Endothelial cell of umbilical vein (primary cell): ENCODE measurements at regions of chr12 and their contacts with region 1.

Region 1: DNA sequence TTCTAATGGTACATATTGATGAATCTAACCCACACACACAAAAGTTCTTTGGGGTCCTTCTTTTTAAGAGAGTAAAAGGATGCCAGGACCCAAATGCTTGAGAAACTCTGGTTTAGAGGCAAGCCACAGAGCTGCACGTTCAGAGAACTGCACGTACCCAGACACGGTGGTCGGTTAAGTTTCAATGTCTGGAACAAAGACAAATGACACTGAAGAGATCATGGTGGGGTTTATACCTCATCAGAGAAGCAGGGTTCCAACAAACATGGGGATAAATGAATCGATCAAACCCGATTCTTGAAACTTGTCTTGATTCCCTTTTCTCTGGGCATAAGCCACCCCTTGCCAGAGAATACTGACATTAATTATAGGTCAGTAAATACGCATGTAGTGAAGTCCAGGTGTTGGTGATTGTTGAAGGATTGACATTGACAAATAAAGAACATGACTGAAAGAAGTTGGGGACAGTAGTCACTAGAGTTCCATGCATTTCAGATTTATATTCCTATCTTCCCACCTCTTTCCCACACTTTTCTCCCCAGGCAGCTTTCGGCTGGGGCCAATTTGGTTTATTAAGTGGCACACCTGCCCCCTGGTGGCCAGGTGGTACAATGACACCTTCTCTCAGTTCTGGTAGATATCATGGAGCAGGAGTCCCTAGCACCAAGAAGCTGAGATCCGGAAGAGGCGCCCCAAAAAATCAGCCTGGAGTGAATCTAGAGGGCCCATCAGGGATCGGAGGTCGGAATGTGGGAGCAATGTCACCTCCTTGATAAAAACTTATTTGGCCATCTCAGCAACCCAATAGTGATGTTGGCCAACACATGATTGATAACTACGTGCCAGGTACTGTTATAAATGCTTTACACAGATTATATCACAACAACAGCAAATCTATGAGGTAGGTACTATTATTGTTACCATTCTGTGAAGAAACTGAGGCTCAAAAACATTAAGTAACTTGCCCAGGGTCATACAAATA is 17.8 kb upstream of the HDAC7 start:
- DNase-seq: peak; percentile 70
- H3K4me3 ChIP-seq: no peak overlapping the region
- H3K27ac ChIP-seq: no peak overlapping the region
- H3K4me1 ChIP-seq: no peaks in the 10 kb centered on the region
- H3K27me3 ChIP-seq: no peaks in the 10 kb centered on the region
- CTCF ChIP-seq: peak; percentile 75 to 80
- POLR2A ChIP-seq: no peak

Region 2: GRCh38 chr12:47651368-47652254 is 185.9 kb before region 1 on chr12:
- CTCF ChIA-PET with region 1: interaction called, 21 read pairs
- POLR2A ChIA-PET with region 1: no interaction called
- dilution Hi-C with region 1: no loop called
- intact Hi-C with region 1: loop called (anchors 1 kb)
- DNase-seq: peak; percentile 66
- H3K4me3 ChIP-seq: no peak overlapping the region
- H3K27ac ChIP-seq: no peak overlapping the region
- H3K4me1 ChIP-seq: no peaks in the 10 kb centered on the region
- H3K27me3 ChIP-seq: no peaks in the 10 kb centered on the region
- CTCF ChIP-seq: peak; percentile 39 to 50
- POLR2A ChIP-seq: no peak

Region 3: GRCh38 chr12:47725893-47726292 is 111.6 kb before region 1 on chr12:
- CTCF ChIA-PET with region 1: interaction called, 23 read pairs
- POLR2A ChIA-PET with region 1: no interaction called
- dilution Hi-C with region 1: no loop called
- intact Hi-C with region 1: no loop called
- DNase-seq: no peak
- H3K4me3 ChIP-seq: no peak overlapping the region
- H3K27ac ChIP-seq: no peak overlapping the region
- H3K4me1 ChIP-seq: no peaks in the 10 kb centered on the region
- H3K27me3 ChIP-seq: no peaks in the 10 kb centered on the region
- CTCF ChIP-seq: no peak
- POLR2A ChIP-seq: no peak

Region 4: GRCh38 chr12:47758834-47759690 is 78.4 kb before region 1 on chr12 and contains the start of gene RAPGEF3:
- CTCF ChIA-PET with region 1: interaction called, 34 read pairs
- POLR2A ChIA-PET with region 1: no interaction called
- dilution Hi-C with region 1: no loop called
- intact Hi-C with region 1: no loop called
- DNase-seq: peak; percentile 94
- H3K4me3 ChIP-seq: peak within 1 kb of the TSS; percentile 50 to 71 (median 62)
- H3K27ac ChIP-seq: peak within 1 kb of the TSS; percentile 95
- H3K4me1 ChIP-seq: peaks cover 52% of the 10 kb centered on the region
- H3K27me3 ChIP-seq: no peaks in the 10 kb centered on the region
- CTCF ChIP-seq: peak; percentile 43 to 70
- POLR2A ChIP-seq: peak; percentile 67
- total RNA-seq, gene RAPGEF3: 53.6 and 55.1 TPM in 2 replicates

Region 5: DNA sequence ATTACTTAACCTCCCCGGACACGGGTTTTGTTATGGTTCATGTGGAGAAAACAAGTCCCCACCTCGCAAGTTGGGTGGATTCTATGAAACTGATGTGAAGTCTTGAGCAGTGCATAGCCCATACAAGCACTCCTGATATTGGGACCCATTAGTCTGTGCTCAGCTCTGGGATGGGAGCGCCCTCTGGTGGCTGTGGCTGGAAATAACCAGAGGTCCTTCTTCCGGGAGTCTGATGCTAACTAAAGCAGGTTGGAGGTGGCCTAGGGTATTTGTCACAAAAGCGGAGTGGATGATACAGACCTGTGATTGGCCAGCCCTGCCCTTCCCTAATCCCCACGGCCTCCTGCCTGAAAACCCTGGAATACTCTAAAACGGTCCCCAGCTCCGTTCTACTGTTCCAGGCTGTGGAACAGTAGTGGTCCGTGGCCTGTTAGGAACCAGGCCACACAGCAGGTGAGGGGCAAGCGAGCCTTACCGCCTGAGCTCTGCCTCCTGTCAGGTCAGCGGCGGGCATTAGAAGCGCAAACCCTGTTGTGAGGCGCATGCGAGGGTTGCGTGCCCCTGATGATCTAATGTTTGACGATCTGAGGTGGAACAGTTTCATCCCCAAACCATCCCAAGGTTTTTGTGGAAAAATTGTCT is 58.1 kb before region 1 on chr12:
- CTCF ChIA-PET with region 1: interaction called, 244 read pairs
- POLR2A ChIA-PET with region 1: interaction called, 8 read pairs
- dilution Hi-C with region 1: no loop called
- intact Hi-C with region 1: loop called (anchors 1 kb)
- DNase-seq: peak; percentile 88
- H3K4me3 ChIP-seq: no peak overlapping the region
- H3K27ac ChIP-seq: no peak overlapping the region
- H3K4me1 ChIP-seq: peaks cover 32% of the 10 kb centered on the region
- H3K27me3 ChIP-seq: no peaks in the 10 kb centered on the region
- CTCF ChIP-seq: peak; percentile 89 to 96
- POLR2A ChIP-seq: no peak

Region 6: DNA sequence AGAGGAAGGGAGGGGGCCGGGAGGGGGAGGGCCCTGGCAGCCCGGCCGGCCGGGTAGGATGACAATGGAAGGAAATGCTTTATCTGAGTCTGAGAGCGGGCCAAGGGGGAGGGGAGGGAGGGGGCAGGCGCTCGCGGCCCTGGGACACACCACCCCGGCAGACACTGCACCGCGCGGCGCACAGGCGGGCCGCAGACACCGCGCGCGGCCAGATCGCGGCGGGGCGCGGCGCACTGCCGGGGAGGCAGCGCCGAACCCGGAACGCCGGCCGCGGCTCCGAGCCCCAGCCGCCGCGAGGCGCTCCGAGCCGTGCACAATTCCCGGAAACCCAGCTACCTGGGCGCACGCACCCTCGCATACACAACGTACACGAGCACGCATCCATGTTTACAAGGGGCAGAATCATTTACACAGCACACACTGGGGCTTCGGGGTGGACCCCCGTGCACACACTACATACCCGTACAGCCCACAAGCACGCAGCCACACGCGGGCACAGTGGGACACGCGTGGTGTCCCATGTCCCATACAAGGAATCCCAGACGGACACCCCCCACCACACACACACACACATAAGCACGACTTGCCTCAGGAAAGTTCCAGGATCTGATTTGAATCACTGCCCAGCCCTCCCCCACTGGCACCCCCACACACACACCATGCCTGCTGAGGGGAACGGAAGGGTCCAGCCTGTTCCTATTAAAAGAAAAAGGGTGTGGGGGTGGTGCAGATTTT is 17.4 kb before region 1 on chr12 and contains the start of gene HDAC7:
- CTCF ChIA-PET with region 1: interaction called, 246 read pairs
- POLR2A ChIA-PET with region 1: interaction called, 4 read pairs
- dilution Hi-C with region 1: no loop called
- intact Hi-C with region 1: loop called (anchors 1 kb)
- DNase-seq: peak; percentile 90
- H3K4me3 ChIP-seq: peak within 1 kb of the TSS; percentile 79 to 85 (median 84)
- H3K27ac ChIP-seq: peak within 1 kb of the TSS; percentile 93
- H3K4me1 ChIP-seq: peaks cover 50% of the 10 kb centered on the region
- H3K27me3 ChIP-seq: no peaks in the 10 kb centered on the region
- CTCF ChIP-seq: no peak
- POLR2A ChIP-seq: peak; percentile 88
- total RNA-seq, gene HDAC7: 249 and 252 TPM in 2 replicates

Region 7: GRCh38 chr12:47870175-47870781 is 32.8 kb after region 1 on chr12:
- CTCF ChIA-PET with region 1: no interaction called
- POLR2A ChIA-PET with region 1: no interaction called
- dilution Hi-C with region 1: no loop called
- intact Hi-C with region 1: no loop called
- DNase-seq: no peak
- H3K4me3 ChIP-seq: no peak overlapping the region
- H3K27ac ChIP-seq: no peak overlapping the region
- H3K4me1 ChIP-seq: peaks cover 6% of the 10 kb centered on the region
- H3K27me3 ChIP-seq: no peaks in the 10 kb centered on the region
- CTCF ChIP-seq: peak; percentile 11 to 41
- POLR2A ChIP-seq: no peak

Region 8: GRCh38 chr12:47904713-47905310 is 67.3 kb after region 1 on chr12 and contains the start of gene VDR:
- CTCF ChIA-PET with region 1: interaction called, 12 read pairs
- POLR2A ChIA-PET with region 1: no interaction called
- dilution Hi-C with region 1: no loop called
- intact Hi-C with region 1: no loop called
- DNase-seq: peak; percentile 61
- H3K4me3 ChIP-seq: peak within 1 kb of the TSS; percentile 36 to 59 (median 44)
- H3K27ac ChIP-seq: no peak within 1 kb of the TSS
- H3K4me1 ChIP-seq: peaks cover 20% of the 10 kb centered on the region
- H3K27me3 ChIP-seq: peaks cover 30 to 34% of the 10 kb centered on the region in 2 experiments
- CTCF ChIP-seq: peak in 1 of 2 donors; percentile 19
- POLR2A ChIP-seq: no peak
- total RNA-seq, gene VDR: 0.48 and 0.73 TPM in 2 replicates